ENCODE measurements at regions of chr3 and their contacts with region 1.

Region 1: GRCh38 chr3:190883973-190884832 is 21.7 kb upstream of the GMNC start:
- DNase-seq: peak in 1 of 2 donors; percentile 39
- ATAC-seq: peak in 1 of 3 donors; percentile 43
- H3K4me3 ChIP-seq: no peak overlapping the region
- H3K4me3 Mint-ChIP-seq: no peak overlapping the region
- H3K27ac ChIP-seq: no peak overlapping the region
- H3K27ac Mint-ChIP-seq: no peak overlapping the region
- H3K4me1 ChIP-seq: no peaks in the 10 kb centered on the region
- H3K4me1 Mint-ChIP-seq: no peaks in the 10 kb centered on the region
- H3K27me3 ChIP-seq: no peaks in the 10 kb centered on the region
- H3K27me3 Mint-ChIP-seq: no peaks in the 10 kb centered on the region
- CTCF ChIP-seq: peak; percentile 61

Region 2: DNA sequence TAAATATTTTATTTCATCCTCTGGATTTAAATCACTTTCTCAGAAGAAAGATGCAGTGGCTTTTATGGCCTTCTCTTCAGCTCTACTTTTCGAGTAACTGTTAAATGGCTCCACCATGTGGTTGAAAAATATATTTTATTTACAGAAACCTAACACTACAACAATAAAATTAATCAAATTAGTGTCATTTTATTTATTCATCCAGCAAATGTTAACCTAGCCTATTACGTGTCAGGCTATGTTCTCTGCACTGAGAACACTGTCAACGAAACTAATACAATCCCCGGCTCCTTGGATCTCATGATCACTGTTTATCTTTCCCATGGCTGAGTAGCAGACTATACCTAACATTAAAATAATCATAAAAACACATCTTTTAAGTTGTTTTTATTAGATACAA is 166.8 kb after region 1 on chr3:
- intact Hi-C with region 1: loop called (anchors 5 kb)
- DNase-seq: no peak
- ATAC-seq: no peak
- H3K4me3 ChIP-seq: no peak overlapping the region
- H3K4me3 Mint-ChIP-seq: no peak overlapping the region
- H3K27ac ChIP-seq: no peak overlapping the region
- H3K27ac Mint-ChIP-seq: no peak overlapping the region
- H3K4me1 ChIP-seq: no peaks in the 10 kb centered on the region
- H3K4me1 Mint-ChIP-seq: no peaks in the 10 kb centered on the region
- H3K27me3 ChIP-seq: no peaks in the 10 kb centered on the region
- H3K27me3 Mint-ChIP-seq: no peaks in the 10 kb centered on the region
- CTCF ChIP-seq: peak; percentile 7